Esophagus squamous epithelium (tissue), 5 donors: ENCODE measurements at regions of chr4 and their contacts with region 1.

Region 1: GRCh38 chr4:177047070-177047850 is 254.5 kb upstream of the VEGFC start:
- DNase-seq: no peak
- H3K4me3 ChIP-seq: no peak overlapping the region
- H3K27ac ChIP-seq: no peak overlapping the region
- H3K4me1 ChIP-seq: no peaks in the 10 kb centered on the region
- H3K27me3 ChIP-seq: no peaks in the 10 kb centered on the region
- CTCF ChIP-seq: peak; percentile 57 to 87 (median 76)
- POLR2A ChIP-seq: no peak

Region 2: GRCh38 chr4:176377780-176378179 is 669.5 kb before region 1 on chr4:
- intact Hi-C with region 1: loop called (anchors 5 kb)
- DNase-seq: no peak
- H3K4me3 ChIP-seq: no peak overlapping the region
- H3K27ac ChIP-seq: no peak overlapping the region
- H3K4me1 ChIP-seq: no peaks in the 10 kb centered on the region
- H3K27me3 ChIP-seq: no peaks in the 10 kb centered on the region
- CTCF ChIP-seq: peak in 3 of 6 experiments; percentile 17 to 48 (median 28)
- POLR2A ChIP-seq: no peak

Region 3: DNA sequence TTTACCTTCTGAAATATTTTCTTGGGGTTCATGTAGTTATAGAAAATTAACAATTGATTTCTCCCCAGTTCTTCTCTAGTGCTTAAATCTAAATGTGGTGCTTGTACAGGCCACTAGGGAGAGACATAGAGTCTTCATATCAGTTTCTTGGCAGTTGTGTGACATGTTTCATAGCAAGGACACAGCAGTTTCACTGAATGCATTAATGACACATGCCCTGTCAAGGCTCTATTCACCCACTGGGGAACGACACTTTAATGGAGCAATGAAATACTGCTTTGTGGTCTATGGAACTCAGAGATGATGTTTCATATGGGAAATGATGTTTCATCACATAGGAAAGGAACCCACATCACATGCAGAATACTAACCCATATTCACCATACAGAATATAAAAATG is 257.3 kb before region 1 on chr4:
- intact Hi-C with region 1: loop called (anchors 10 kb)
- DNase-seq: no peak
- H3K4me3 ChIP-seq: peak overlapping the region in 2 of 4 donors; percentile 67 to 85
- H3K27ac ChIP-seq: no peak overlapping the region
- H3K4me1 ChIP-seq: peaks cover 0 to 42% (median 11%) of the 10 kb centered on the region in 3 donors
- H3K27me3 ChIP-seq: peaks cover 0 to 34% (median 0%) of the 10 kb centered on the region in 4 donors
- CTCF ChIP-seq: peak; percentile 32 to 65 (median 47)
- POLR2A ChIP-seq: no peak